ENCODE measurements at regions of chr6 and their contacts with region 1.

Region 1: DNA sequence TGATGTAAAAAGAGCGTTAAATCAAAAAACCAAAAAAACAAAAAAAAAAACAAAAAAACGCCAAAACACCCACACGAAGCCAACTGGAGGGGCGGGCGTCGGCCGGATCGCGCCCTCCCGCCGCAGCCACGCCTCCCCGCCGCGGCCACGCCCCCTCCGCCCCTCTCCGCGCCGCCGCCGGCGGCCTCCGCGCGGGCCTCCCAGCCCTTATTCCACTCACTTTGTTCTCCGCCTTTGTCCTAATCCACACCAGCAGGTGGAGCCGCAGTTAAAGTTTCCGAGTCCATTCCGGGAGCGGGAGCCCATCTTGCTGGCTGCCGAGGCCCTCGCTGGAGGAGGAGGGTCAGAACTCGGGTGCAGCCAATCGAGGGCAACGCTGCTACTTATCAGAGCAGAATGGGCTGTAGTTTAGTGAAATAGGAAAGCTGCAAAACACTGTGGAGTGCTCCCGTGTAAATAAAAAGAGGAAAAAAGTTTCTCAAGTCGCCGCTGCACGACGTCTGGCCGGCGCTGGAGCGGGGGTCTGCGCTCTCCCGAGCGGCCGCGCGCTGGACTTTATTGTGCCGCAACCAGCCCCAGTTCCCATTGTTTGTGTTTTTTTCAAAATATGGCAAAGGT is at the start of gene ASF1A:
- DNase-seq: peak; percentile 96
- H3K4me3 Mint-ChIP-seq: peak within 1 kb of the TSS; percentile 88
- H3K27ac Mint-ChIP-seq: peak within 1 kb of the TSS; percentile 96
- H3K4me1 Mint-ChIP-seq: peaks cover 48% of the 10 kb centered on the region
- H3K27me3 Mint-ChIP-seq: no peaks in the 10 kb centered on the region
- total RNA-seq, gene ASF1A: 33.9 and 34.1 TPM in 2 replicates

Region 2: GRCh38 chr6:117602151-117602898 is 1291.6 kb before region 1 on chr6 and contains the start of gene GOPC:
- intact Hi-C with region 1: loop called (anchors 5 kb)
- DNase-seq: peak; percentile 95
- H3K4me3 Mint-ChIP-seq: peak within 1 kb of the TSS; percentile 97
- H3K27ac Mint-ChIP-seq: peak within 1 kb of the TSS; percentile 99
- H3K4me1 Mint-ChIP-seq: peaks cover 32% of the 10 kb centered on the region
- H3K27me3 Mint-ChIP-seq: no peaks in the 10 kb centered on the region
- total RNA-seq, gene GOPC: 22.9 and 24.2 TPM in 2 replicates

Region 3: GRCh38 chr6:118651282-118652050 is 242.4 kb before region 1 on chr6 and contains the start of gene CEP85L:
- intact Hi-C with region 1: loop called (anchors 1 kb)
- DNase-seq: peak; percentile 85
- H3K4me3 Mint-ChIP-seq: peak within 1 kb of the TSS; percentile 84
- H3K27ac Mint-ChIP-seq: peak within 1 kb of the TSS; percentile 89
- H3K4me1 Mint-ChIP-seq: peaks cover 36% of the 10 kb centered on the region
- H3K27me3 Mint-ChIP-seq: no peaks in the 10 kb centered on the region
- total RNA-seq, gene CEP85L: 34.2 and 36.7 TPM in 2 replicates

Region 4: GRCh38 chr6:118843685-118844390 is 50.1 kb before region 1 on chr6:
- intact Hi-C with region 1: loop called (anchors 1 kb)
- DNase-seq: no peak
- H3K4me3 Mint-ChIP-seq: peak overlapping the region; percentile 22
- H3K27ac Mint-ChIP-seq: peak overlapping the region; percentile 59
- H3K4me1 Mint-ChIP-seq: peaks cover 25% of the 10 kb centered on the region
- H3K27me3 Mint-ChIP-seq: no peaks in the 10 kb centered on the region

Region 5: GRCh38 chr6:118921084-118921483 is 27.2 kb after region 1 on chr6:
- intact Hi-C with region 1: no loop called
- DNase-seq: no peak
- H3K4me3 Mint-ChIP-seq: no peak overlapping the region
- H3K27ac Mint-ChIP-seq: no peak overlapping the region
- H3K4me1 Mint-ChIP-seq: peaks cover 6% of the 10 kb centered on the region
- H3K27me3 Mint-ChIP-seq: no peaks in the 10 kb centered on the region

Region 6: GRCh38 chr6:119078376-119079282 is 184.7 kb after region 1 on chr6 and contains the start of gene FAM184A:
- intact Hi-C with region 1: loop called (anchors 1 kb)
- DNase-seq: peak; percentile 67
- H3K4me3 Mint-ChIP-seq: peak within 1 kb of the TSS; percentile 89
- H3K27ac Mint-ChIP-seq: peak within 1 kb of the TSS; percentile 69
- H3K4me1 Mint-ChIP-seq: peaks cover 28% of the 10 kb centered on the region
- H3K27me3 Mint-ChIP-seq: peaks cover 8% of the 10 kb centered on the region
- total RNA-seq, gene FAM184A: 2.6 and 2.9 TPM in 2 replicates

Region 7: DNA sequence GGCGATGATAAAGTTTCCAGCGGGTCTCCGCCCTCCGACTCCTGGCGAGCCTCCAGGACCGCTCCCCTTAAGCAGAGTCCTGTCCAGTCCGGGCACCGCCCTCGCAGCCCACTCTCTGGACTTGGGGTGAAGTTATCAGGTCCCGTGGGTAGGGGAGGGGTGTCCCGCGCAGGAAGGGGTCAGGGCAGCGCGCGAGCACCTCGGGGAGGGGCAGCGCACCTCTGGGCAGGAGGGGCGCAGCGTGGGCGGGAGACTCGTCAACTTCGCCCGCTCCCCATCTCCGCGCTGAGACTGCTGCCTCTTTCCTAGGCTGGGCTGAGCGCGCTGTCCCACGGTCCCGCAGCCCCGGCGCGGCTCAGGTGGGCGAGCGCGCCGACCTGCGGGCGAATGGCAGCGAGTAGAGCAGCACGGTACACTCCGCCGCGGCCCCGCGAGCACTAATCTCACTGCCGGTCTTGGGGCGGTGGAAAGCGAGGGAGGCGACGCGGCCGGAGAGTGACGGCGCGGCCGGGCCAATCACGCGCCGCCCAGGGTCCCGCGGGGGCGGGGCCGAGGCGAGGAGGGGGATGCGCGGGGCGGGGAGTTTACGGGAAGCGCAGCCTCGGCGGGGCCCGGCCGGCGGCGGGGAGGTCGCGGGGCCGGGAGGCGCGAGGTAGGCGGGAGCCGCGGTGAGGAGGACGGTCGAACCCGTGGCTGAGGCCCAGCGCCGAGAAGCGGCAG is 455.6 kb after region 1 on chr6 and contains the start of gene MAN1A1:
- intact Hi-C with region 1: loop called (anchors 2 kb)
- DNase-seq: peak; percentile 90
- H3K4me3 Mint-ChIP-seq: peak within 1 kb of the TSS; percentile 94
- H3K27ac Mint-ChIP-seq: peak within 1 kb of the TSS; percentile 85
- H3K4me1 Mint-ChIP-seq: peaks cover 53% of the 10 kb centered on the region
- H3K27me3 Mint-ChIP-seq: no peaks in the 10 kb centered on the region
- total RNA-seq, gene MAN1A1: 43.8 and 45.0 TPM in 2 replicates

Region 8: GRCh38 chr6:119533603-119534279 is 639.8 kb after region 1 on chr6:
- intact Hi-C with region 1: no loop called
- DNase-seq: no peak
- H3K4me3 Mint-ChIP-seq: no peak overlapping the region
- H3K27ac Mint-ChIP-seq: no peak overlapping the region
- H3K4me1 Mint-ChIP-seq: peaks cover 11% of the 10 kb centered on the region
- H3K27me3 Mint-ChIP-seq: peaks cover 18% of the 10 kb centered on the region